ENCODE measurements at regions of chr7 and their contacts with region 1.

Region 1: GRCh38 chr7:21253740-21254687 is 173.9 kb upstream of the SP4 start:
- DNase-seq: peak; percentile 82
- ATAC-seq: peak; percentile 96
- H3K4me3 Mint-ChIP-seq: peak overlapping the region; percentile 58
- H3K27ac Mint-ChIP-seq: no peak overlapping the region
- H3K4me1 Mint-ChIP-seq: peaks cover 58% of the 10 kb centered on the region
- H3K27me3 Mint-ChIP-seq: no peaks in the 10 kb centered on the region
- CTCF ChIP-seq: peak; percentile 58

Region 2: GRCh38 chr7:20778063-20778721 is 475.8 kb before region 1 on chr7:
- CTCF ChIA-PET with region 1: interaction called, 74 read pairs
- POLR2A ChIA-PET with region 1: interaction called, 4 read pairs
- DNase-seq: peak; percentile 86
- ATAC-seq: peak; percentile 86
- H3K4me3 Mint-ChIP-seq: peak overlapping the region; percentile 77
- H3K27ac Mint-ChIP-seq: peak overlapping the region; percentile 79
- H3K4me1 Mint-ChIP-seq: peaks cover 79% of the 10 kb centered on the region
- H3K27me3 Mint-ChIP-seq: peaks cover 21% of the 10 kb centered on the region
- CTCF ChIP-seq: peak; percentile 69

Region 3: GRCh38 chr7:21028186-21028585 is 225.8 kb before region 1 on chr7:
- CTCF ChIA-PET with region 1: interaction called, 18 read pairs
- POLR2A ChIA-PET with region 1: no interaction called
- DNase-seq: peak; percentile 30
- ATAC-seq: peak; percentile 33
- H3K4me3 Mint-ChIP-seq: peak overlapping the region; percentile 46
- H3K27ac Mint-ChIP-seq: peak overlapping the region; percentile 78
- H3K4me1 Mint-ChIP-seq: peaks cover 88% of the 10 kb centered on the region
- H3K27me3 Mint-ChIP-seq: peaks cover 6% of the 10 kb centered on the region; the same call in 1 of the 2 replicates
- CTCF ChIP-seq: no peak

Region 4: DNA sequence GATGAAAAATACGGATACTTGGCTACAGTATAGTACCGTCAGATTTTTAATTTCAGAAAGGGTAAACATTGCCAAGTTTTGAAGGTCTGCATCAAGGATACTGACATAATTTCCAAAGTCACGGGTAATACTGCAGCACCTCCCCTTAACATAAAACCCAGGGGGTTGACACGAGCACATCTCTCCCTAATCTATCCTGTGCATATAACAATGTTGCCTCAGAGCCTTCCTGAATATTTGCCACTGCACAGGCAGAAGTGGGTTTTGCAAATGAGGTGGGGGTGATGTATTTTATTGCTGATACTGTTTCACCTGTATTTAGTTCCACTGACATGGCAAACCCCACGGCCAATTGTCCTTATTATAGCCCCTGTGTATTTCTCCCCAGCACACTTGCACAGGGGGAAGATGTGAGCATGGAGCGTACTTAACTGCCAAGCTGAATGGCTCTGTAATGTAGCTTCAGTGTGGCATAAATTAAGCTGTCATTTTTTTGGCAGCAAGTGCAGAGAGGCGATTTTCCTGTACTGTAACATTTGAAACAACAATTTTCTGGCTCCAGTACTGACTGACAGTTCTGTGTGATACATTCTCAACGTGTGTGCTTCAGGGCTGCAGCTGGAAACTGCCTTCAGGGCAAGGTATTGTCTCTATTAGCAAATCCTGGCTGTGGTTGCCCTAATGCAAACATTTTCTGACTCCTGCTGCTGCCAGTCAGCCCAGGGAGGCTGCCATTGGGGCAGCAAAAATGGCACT is 125.8 kb before region 1 on chr7:
- CTCF ChIA-PET with region 1: interaction called, 26 read pairs
- POLR2A ChIA-PET with region 1: no interaction called
- DNase-seq: no peak
- ATAC-seq: peak; percentile 42
- H3K4me3 Mint-ChIP-seq: no peak overlapping the region
- H3K27ac Mint-ChIP-seq: no peak overlapping the region
- H3K4me1 Mint-ChIP-seq: peaks cover 57% of the 10 kb centered on the region
- H3K27me3 Mint-ChIP-seq: peaks cover 26% of the 10 kb centered on the region
- CTCF ChIP-seq: no peak

Region 5: DNA sequence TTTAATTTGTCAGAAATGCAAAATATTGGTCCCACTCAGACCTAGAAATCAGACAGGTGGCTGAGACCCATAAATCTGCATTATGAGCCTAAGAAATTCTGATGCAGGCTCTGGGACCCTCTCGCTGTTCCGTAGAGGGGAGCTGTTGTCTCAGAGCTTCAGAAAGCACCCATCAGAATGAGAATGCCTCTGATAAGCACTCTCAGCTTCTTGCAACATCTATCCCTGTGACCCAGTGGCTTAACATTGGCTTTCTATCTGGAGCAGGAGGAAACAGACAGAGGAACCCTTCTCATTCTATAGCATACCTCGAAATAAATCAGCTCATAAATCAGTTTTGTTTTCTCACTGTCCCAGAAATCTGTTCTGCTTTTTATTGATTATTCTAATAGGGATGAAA is 10.7 kb before region 1 on chr7:
- CTCF ChIA-PET with region 1: interaction called, 16 read pairs
- POLR2A ChIA-PET with region 1: no interaction called
- DNase-seq: no peak
- ATAC-seq: peak; percentile 92
- H3K4me3 Mint-ChIP-seq: no peak overlapping the region
- H3K27ac Mint-ChIP-seq: no peak overlapping the region
- H3K4me1 Mint-ChIP-seq: peaks cover 13% of the 10 kb centered on the region
- H3K27me3 Mint-ChIP-seq: no peaks in the 10 kb centered on the region
- CTCF ChIP-seq: no peak

Region 6: DNA sequence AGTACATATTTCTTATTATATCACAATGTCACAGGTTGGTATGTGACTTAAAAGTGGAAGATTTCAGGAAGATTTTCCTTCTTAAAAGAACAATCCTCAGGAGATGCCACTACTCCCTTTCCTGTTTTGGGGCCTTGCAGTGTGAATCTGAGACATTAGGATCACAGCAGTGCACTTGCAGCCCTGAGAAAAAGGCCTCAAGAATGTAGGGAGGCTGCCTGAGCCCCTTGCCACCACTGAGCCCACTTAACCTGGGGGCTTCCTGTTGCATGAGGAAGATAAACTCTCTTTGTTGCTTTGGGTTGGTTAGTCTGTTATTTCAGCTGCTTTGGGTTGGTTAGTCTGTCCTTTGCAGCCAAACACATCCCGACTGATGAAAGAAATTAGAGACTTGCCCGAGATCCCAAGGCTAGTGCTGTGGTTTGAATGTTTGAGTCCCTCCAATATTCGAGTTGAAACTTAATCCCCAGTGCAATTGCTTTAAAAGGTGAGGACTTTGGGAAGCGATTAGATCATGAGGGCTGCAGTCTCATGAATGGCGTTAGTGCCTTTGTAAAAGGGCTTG is 22.5 kb after region 1 on chr7:
- CTCF ChIA-PET with region 1: no interaction called
- POLR2A ChIA-PET with region 1: no interaction called
- DNase-seq: no peak
- ATAC-seq: peak; percentile 88
- H3K4me3 Mint-ChIP-seq: no peak overlapping the region
- H3K27ac Mint-ChIP-seq: peak overlapping the region; percentile 52
- H3K4me1 Mint-ChIP-seq: peaks cover 10% of the 10 kb centered on the region
- H3K27me3 Mint-ChIP-seq: no peaks in the 10 kb centered on the region
- CTCF ChIP-seq: no peak